ENCODE measurements at regions of chr19 and their contacts with region 1.

Region 1: GRCh38 chr19:36214386-36215275 is at the starts of genes ZNF146 and ZNF565:
- DNase-seq: peak; percentile 95
- ATAC-seq: peak; percentile 95
- H3K4me3 ChIP-seq: peak within 1 kb of the TSS; percentile 78
- H3K27ac ChIP-seq: peak within 1 kb of the TSS; percentile 73
- H3K4me1 ChIP-seq: peaks cover 9% of the 10 kb centered on the region
- H3K27me3 ChIP-seq: no peaks in the 10 kb centered on the region
- CTCF ChIP-seq: no peak
- total RNA-seq, gene ZNF146: 78.4 and 83.1 TPM in 2 replicates
- total RNA-seq, gene ZNF565: 3.0 and 3.1 TPM in 2 replicates

Region 2: GRCh38 chr19:36041831-36042230 is 172.8 kb before region 1 on chr19:
- CTCF ChIA-PET with region 1: no interaction called
- POLR2A ChIA-PET with region 1: no interaction called
- intact Hi-C with region 1: no loop called
- DNase-seq: peak; percentile 9
- ATAC-seq: no peak
- H3K4me3 ChIP-seq: no peak overlapping the region
- H3K27ac ChIP-seq: no peak overlapping the region
- H3K4me1 ChIP-seq: no peaks in the 10 kb centered on the region
- H3K27me3 ChIP-seq: no peaks in the 10 kb centered on the region
- CTCF ChIP-seq: no peak

Region 3: GRCh38 chr19:36128392-36128736 is 86.3 kb before region 1 on chr19:
- CTCF ChIA-PET with region 1: no interaction called
- POLR2A ChIA-PET with region 1: no interaction called
- intact Hi-C with region 1: no loop called
- DNase-seq: no peak
- ATAC-seq: no peak
- H3K4me3 ChIP-seq: peak overlapping the region; percentile 57
- H3K27ac ChIP-seq: peak overlapping the region; percentile 73
- H3K4me1 ChIP-seq: peaks cover 18% of the 10 kb centered on the region
- H3K27me3 ChIP-seq: no peaks in the 10 kb centered on the region
- CTCF ChIP-seq: no peak

Region 4: DNA sequence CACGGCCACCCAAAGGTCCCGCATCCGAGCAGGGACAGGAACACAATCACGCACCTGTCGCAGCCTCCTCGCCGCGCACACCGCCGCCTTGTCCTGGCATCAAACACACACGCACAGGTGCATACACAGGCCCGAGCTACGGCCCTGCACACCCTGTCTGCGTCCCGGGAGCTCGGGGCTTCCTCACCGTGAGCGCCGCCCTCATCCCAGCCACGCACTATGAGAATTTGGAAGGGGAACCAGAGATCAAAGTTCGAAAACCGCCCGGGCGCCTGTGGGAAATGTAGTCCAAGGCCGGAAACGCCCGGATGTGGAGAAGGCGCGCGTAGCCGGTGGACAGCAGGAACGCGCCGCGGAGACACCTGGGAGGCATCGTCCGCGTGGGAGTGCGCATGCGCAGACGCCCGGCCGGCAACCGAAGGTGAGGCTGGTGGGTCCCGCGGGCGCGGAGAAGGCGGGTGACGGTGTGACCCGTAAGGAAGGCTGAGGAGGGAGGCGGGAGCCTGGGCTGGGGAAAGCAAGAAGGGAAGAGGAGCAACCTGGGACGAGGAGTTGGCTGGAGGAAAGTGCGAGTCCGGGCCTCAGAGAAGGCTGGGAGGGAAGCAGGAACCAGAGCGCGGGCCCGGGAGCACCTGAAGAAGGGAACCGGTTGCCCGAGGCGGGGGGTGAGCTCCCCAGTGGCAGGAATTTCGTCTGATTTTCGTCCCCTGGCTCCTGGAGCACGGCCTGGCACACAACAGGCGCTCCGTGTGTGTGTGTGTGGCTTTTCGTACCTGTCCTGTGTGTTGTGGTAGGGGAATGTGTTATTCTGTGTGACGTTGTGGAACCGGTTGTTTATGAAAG is 472.8 kb after region 1 on chr19 and contains the start of gene ZNF567:
- CTCF ChIA-PET with region 1: no interaction called
- POLR2A ChIA-PET with region 1: no interaction called
- intact Hi-C with region 1: loop called (anchors 10 kb)
- DNase-seq: peak; percentile 94
- ATAC-seq: peak; percentile 91
- H3K4me3 ChIP-seq: peak within 1 kb of the TSS; percentile 89
- H3K27ac ChIP-seq: peak within 1 kb of the TSS; percentile 32
- H3K4me1 ChIP-seq: 0 out of 2 replicates have a peak, but pooled peaks cover 3% of the 10 kb centered on the region
- H3K27me3 ChIP-seq: no peaks in the 10 kb centered on the region
- CTCF ChIP-seq: no peak
- total RNA-seq, gene ZNF567: 3.5 and 6.5 TPM in 2 replicates

Measured in PC-3 (cell line).